ENCODE measurements at regions of chr16 and their contacts with region 1.

Region 1: DNA sequence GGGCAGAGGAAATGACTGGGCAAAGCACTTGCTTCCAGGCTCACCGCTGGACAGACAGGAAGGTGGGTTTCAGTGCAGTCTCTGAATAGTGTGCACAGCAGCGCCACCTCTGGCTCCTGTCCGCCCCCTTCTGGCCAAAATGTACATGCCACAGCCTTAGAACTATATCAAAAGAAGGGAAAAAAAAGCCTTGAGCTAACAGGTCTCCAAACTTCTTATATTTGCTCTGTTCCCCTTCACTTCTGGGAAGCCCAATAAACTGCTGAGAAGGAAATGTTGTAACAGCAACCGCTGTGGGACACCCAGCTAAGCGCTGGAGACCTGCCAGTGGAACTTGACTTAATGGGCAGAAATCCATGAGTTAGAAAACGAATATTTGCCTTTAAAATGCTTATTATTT is 17.5 kb downstream of the COG7 start:
- DNase-seq: peak; percentile 83
- ATAC-seq: peak; percentile 94
- H3K4me3 Mint-ChIP-seq: no peak overlapping the region
- H3K27ac Mint-ChIP-seq: no peak overlapping the region
- H3K4me1 Mint-ChIP-seq: no peaks in the 10 kb centered on the region
- H3K27me3 Mint-ChIP-seq: no peaks in the 10 kb centered on the region
- CTCF ChIP-seq: peak; percentile 84

Region 2: DNA sequence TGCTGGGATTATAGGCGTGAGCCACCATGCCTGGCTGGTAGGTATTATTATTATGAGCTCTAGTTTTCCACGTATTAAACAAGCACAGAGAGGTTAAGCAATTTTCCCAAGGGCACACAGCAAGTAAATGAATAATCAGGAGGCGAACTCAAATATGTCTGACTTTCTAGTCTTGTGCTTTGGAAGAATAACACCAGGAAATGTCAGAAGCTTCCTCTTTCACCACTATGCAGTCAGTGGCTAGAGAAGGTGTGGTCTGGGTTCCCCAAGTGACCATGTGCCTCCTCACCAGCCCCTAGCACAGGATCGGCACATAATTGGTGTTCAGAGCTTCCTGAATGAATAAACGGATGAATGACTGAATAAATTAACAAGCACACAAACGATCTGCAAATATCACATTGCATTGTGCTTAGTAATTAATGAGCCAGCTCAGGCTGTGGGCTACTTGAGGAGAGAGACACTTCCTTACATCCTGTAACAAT is 155.0 kb before region 1 on chr16:
- CTCF ChIA-PET with region 1: interaction called, 11 read pairs
- POLR2A ChIA-PET with region 1: no interaction called
- DNase-seq: no peak
- ATAC-seq: no peak
- H3K4me3 Mint-ChIP-seq: no peak overlapping the region
- H3K27ac Mint-ChIP-seq: peak overlapping the region; percentile 66
- H3K4me1 Mint-ChIP-seq: peaks cover 31% of the 10 kb centered on the region
- H3K27me3 Mint-ChIP-seq: no peaks in the 10 kb centered on the region
- CTCF ChIP-seq: no peak

Region 3: DNA sequence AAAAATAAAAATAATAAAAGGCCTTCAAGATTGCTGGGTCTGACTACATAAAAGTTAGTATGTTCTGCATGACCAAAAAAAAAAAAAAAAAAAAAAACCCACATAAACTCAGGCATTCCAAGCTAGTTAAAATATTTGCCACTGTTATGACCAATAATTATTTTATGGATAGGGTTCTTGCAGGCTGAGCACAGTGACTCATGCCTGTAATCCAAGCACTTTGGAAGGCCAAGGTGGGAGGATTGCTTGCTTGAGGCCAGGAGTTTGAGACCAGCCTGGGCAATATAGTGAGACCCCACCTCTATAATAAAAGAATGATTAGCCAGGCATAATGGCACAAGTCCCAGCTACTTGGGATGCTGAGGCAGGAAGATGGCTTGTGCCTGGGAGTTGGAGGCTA is 125.3 kb before region 1 on chr16:
- CTCF ChIA-PET with region 1: interaction called, 11 read pairs
- POLR2A ChIA-PET with region 1: no interaction called
- DNase-seq: no peak
- ATAC-seq: no peak
- H3K4me3 Mint-ChIP-seq: no peak overlapping the region
- H3K27ac Mint-ChIP-seq: no peak overlapping the region
- H3K4me1 Mint-ChIP-seq: no peaks in the 10 kb centered on the region
- H3K27me3 Mint-ChIP-seq: no peaks in the 10 kb centered on the region
- CTCF ChIP-seq: no peak

Region 4: DNA sequence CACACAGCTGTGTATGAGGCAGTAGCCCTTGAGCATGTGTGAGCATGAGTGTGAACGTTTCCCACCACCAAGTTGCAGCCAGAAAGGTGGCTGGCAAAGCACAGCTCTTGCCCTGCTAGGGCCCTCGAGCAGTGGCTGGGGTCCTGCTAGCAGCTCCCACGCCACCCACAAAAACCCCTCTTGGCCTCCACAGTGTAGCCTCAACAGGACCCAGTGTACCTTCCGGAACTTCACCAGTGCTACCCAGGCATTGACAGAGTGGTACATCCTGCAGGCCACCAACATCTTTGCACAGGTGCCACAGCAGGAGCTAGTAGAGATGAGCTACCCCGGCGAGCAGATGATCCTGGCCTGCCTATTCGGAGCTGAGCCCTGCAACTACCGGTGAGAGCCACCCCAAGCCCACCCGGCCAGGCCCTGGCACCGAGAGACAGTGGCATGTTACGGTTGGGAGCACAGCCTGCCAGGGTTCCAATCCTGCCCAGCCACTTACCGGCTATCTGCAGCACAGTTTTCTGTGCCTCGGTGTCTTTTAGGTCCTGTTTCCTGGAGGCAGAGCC is 80.3 kb before region 1 on chr16:
- CTCF ChIA-PET with region 1: interaction called, 10 read pairs
- POLR2A ChIA-PET with region 1: no interaction called
- DNase-seq: no peak
- ATAC-seq: no peak
- H3K4me3 Mint-ChIP-seq: no peak overlapping the region
- H3K27ac Mint-ChIP-seq: no peak overlapping the region
- H3K4me1 Mint-ChIP-seq: no peaks in the 10 kb centered on the region
- H3K27me3 Mint-ChIP-seq: no peaks in the 10 kb centered on the region
- CTCF ChIP-seq: no peak

Region 5: GRCh38 chr16:23391381-23392222 is 43.9 kb before region 1 on chr16:
- CTCF ChIA-PET with region 1: interaction called, 11 read pairs
- POLR2A ChIA-PET with region 1: no interaction called
- DNase-seq: no peak
- ATAC-seq: no peak
- H3K4me3 Mint-ChIP-seq: no peak overlapping the region
- H3K27ac Mint-ChIP-seq: no peak overlapping the region
- H3K4me1 Mint-ChIP-seq: no peaks in the 10 kb centered on the region
- H3K27me3 Mint-ChIP-seq: no peaks in the 10 kb centered on the region
- CTCF ChIP-seq: no peak

Region 6: GRCh38 chr16:23416816-23417215 is 18.7 kb before region 1 on chr16:
- CTCF ChIA-PET with region 1: interaction called, 16 read pairs
- POLR2A ChIA-PET with region 1: no interaction called
- DNase-seq: no peak
- ATAC-seq: no peak
- H3K4me3 Mint-ChIP-seq: no peak overlapping the region
- H3K27ac Mint-ChIP-seq: no peak overlapping the region
- H3K4me1 Mint-ChIP-seq: peaks cover 9% of the 10 kb centered on the region
- H3K27me3 Mint-ChIP-seq: no peaks in the 10 kb centered on the region
- CTCF ChIP-seq: no peak

Region 7: GRCh38 chr16:23744561-23744960 is 309.1 kb after region 1 on chr16:
- CTCF ChIA-PET with region 1: no interaction called
- POLR2A ChIA-PET with region 1: no interaction called
- DNase-seq: no peak
- ATAC-seq: no peak
- H3K4me3 Mint-ChIP-seq: no peak overlapping the region
- H3K27ac Mint-ChIP-seq: no peak overlapping the region
- H3K4me1 Mint-ChIP-seq: peaks cover 3% of the 10 kb centered on the region; the same call in 1 of the 2 replicates
- H3K27me3 Mint-ChIP-seq: peaks cover 61% of the 10 kb centered on the region
- CTCF ChIP-seq: no peak